ENCODE measurements at regions of chr6 and their contacts with region 1.

Region 1: DNA sequence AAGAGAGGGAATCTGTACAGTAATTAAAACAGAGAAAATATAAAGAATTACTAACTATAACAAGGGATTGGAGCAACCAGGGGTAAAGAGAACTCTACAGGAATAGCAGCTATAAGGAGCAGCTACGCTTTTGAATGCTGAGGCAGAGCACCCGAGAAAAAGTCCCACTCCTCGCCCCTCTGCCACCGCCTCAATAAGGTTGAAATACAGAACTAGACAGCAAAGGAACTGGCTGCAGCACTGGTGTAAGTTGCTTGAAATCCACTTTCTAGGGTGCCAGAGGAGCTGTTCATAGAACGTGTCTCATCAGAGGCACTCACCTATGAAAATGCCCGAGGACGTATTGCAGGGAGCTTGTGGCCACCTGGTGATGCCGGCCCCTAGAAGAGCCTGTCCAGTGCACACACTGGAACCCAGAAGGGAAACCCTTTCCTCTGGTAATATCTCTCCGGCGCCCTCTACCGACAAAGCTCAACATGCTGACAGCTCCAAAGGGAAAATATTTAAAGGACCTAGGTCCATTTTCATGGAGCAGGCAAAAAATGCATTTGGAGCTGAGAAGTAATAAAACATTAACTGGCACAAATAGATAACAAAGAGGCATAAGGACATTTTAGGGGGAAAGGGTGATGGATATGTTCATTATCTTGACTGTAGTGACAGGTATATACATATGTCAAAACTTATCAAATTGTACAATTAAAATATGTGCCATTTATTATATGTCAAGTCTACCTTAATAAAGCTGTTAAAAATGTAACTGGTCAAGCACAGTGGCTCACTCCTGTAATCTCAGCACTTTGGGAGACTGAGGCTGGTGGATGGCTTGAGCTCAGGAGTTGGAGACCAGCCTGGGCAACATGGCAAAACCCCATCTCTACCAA is 137.4 kb upstream of the HDAC2 start:
- DNase-seq: peak; percentile 2
- H3K4me3 Mint-ChIP-seq: no peak overlapping the region
- H3K27ac Mint-ChIP-seq: no peak overlapping the region
- H3K4me1 Mint-ChIP-seq: no peaks in the 10 kb centered on the region
- H3K27me3 Mint-ChIP-seq: peaks cover 6% of the 10 kb centered on the region

Region 2: DNA sequence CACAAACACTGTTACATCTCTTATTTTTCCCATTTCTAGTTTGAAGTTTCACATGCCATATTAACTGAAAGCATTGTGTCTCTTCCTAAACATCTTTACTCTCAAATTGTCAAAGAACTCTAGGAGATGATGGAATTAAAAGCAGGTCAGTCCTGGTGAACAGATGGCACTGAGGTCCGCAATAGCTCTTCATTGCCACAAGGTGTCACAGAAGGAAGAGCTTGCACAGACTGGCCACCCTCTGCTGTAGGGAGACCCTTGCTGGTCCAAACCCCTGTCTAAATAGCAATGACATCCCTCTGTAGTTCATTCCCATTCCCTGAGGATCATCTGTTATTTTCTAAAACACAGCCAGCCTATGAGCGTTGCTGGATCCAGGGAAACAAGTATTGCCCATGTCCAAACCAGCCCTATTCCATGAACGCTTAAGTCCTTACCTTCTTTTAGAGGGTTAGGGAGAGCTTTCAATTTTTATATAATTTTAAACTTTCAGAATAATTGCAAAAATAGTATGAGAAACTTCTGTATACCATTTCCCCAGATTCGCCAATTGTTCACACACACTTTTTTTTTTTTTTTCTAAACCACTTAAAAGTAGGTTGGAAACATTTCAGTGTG is 127.3 kb before region 1 on chr6:
- intact Hi-C with region 1: loop called (anchors 1 kb)
- DNase-seq: no peak
- H3K4me3 Mint-ChIP-seq: no peak overlapping the region
- H3K27ac Mint-ChIP-seq: no peak overlapping the region
- H3K4me1 Mint-ChIP-seq: no peaks in the 10 kb centered on the region
- H3K27me3 Mint-ChIP-seq: peaks cover 13% of the 10 kb centered on the region

Region 3: GRCh38 chr6:113994918-113995342 is 113.4 kb before region 1 on chr6:
- intact Hi-C with region 1: loop called (anchors 5 kb)
- DNase-seq: peak; percentile 14
- H3K4me3 Mint-ChIP-seq: no peak overlapping the region
- H3K27ac Mint-ChIP-seq: no peak overlapping the region
- H3K4me1 Mint-ChIP-seq: no peaks in the 10 kb centered on the region
- H3K27me3 Mint-ChIP-seq: peaks cover 10% of the 10 kb centered on the region

Region 4: DNA sequence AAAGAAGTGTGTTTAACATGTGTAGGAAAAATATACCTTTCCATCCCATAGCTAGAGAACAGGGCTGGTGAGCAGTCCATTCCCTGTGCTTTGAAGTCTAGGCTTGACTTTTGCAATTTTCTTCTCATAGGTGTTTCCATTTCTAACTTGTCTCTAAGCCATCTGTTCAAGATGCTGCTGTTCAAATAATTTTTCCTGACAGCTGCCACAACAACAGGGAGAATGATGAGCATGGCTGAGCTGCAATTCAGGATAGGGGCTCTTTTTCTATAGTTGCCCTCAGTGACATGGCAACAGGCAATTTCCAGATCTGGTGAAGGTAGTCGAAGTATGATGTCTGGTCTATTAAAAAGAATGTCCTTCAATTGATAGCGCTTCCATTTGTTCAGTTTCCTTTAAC is 337.5 kb after region 1 on chr6:
- intact Hi-C with region 1: no loop called
- DNase-seq: no peak
- H3K4me3 Mint-ChIP-seq: no peak overlapping the region
- H3K27ac Mint-ChIP-seq: no peak overlapping the region
- H3K4me1 Mint-ChIP-seq: no peaks in the 10 kb centered on the region
- H3K27me3 Mint-ChIP-seq: no peaks in the 10 kb centered on the region

Measured in activated T-helper 1 cell treated with anti-CD3 and anti-CD28 coated beads, Interleukin-12 subunit alpha, Interleukin-12 subunit beta, Interleukin-2, Interleukin-4 antibody, amounts not matched to agents 30 ng/mL and 10 ng/mL and 1 ng/mL, durations not matched to agents 14 hours and 24 hours and 36 hours (primary cell).